ENCODE measurements at regions of chr5 and their contacts with region 1.

Region 1: DNA sequence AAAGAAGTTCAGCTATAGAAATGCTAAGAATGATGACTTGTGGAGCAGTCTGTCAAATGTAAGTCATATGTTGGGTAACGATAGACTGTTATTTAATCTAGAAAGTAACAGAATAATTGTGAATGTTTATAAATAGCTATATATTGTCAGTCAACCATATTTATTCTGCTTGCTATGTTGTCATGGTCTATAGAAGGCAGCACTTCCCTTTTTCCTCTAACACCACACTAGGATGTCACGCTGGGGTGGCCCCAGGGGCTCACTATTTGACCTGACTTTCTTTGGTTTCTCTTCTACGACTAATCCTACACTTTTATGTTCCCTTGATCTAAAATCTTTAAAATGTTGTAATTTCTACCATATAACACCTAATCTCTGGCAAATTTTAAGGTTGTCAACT is 20.5 kb downstream of the ERAP2 start:
- DNase-seq: no peak
- H3K4me3 Mint-ChIP-seq: peak overlapping the region; percentile 67
- H3K27ac Mint-ChIP-seq: peak overlapping the region; percentile 87
- H3K4me1 Mint-ChIP-seq: peaks cover 47% of the 10 kb centered on the region
- H3K27me3 Mint-ChIP-seq: no peaks in the 10 kb centered on the region

Region 2: DNA sequence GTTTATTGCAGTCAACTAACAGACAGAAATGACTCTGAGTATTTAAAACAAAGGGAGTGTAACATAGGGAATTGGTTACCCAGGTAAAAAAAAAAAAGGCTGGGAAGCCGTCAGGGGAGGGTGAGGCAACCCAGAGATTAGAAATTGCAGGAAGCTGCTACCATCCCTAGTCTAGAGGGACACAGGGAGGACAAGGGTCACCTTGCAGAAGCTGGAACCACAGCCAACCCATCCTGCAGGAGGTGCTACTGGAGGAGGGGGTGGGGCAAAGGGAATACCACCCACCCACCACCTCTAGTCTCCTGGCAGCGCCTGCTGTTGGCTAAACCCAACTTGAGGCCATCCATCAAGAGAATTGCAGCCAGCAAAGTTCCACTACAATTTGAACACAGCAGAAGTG is 228.1 kb before region 1 on chr5:
- CTCF ChIA-PET with region 1: no interaction called
- POLR2A ChIA-PET with region 1: no interaction called
- DNase-seq: no peak
- H3K4me3 Mint-ChIP-seq: no peak overlapping the region
- H3K27ac Mint-ChIP-seq: no peak overlapping the region
- H3K4me1 Mint-ChIP-seq: peaks cover 25% of the 10 kb centered on the region
- H3K27me3 Mint-ChIP-seq: no peaks in the 10 kb centered on the region

Region 3: DNA sequence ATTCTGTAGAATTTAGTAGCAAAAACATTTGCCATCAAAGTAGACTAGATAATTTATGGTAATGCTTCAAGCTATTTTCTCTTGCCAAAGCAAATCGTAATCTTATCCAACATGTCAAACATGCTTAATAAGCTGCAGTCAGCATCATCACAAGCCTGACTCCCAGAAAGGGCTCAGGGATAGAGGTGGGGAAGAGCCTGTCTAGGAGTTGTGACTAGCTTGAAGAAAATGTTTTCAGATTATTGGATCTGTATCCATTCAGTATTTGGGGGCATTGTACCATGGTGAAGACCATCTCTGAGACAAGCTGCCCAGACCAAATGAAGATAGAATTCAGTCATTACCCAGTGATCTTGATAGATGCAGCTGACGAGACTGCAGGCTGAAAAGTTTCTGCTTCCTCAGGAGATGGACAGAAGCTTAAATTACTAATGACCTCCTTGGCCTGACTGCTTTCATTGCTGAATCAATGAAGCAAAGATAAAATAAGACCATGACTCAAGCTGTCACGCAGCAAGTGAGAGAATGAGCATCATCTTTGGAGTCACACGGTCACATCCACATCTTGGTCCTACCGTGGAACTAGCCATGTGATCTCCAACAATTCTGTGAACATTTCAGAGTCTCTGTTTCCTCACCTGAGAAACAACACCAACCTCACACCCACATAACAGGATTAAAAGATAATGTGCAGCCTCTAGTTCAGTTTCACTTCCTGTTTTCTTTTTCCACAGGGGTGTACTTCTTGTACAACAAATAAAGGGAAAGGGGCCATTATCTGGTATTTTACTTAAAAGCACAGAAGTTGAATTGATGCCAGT is 11.1 kb before region 1 on chr5:
- CTCF ChIA-PET with region 1: interaction called, 9 read pairs
- POLR2A ChIA-PET with region 1: interaction called, 44 read pairs
- DNase-seq: peak; percentile 51
- H3K4me3 Mint-ChIP-seq: peak overlapping the region; percentile 4
- H3K27ac Mint-ChIP-seq: peak overlapping the region; percentile 88
- H3K4me1 Mint-ChIP-seq: peaks cover 59% of the 10 kb centered on the region
- H3K27me3 Mint-ChIP-seq: no peaks in the 10 kb centered on the region

Measured in activated CD4-positive, alpha-beta memory T cell treated with anti-CD3 and anti-CD28 coated beads, Interleukin-2, amount 10 ng/mL, durations not matched to agents 7 days and 5 days (primary cell).